ENCODE measurements at regions of chr1 and their contacts with region 1.

Region 1: GRCh38 chr1:92310185-92310597 is 11.3 kb downstream of the RPAP2 start:
- DNase-seq: peak in 3 of 14 experiments; percentile 62 to 66 (median 64)
- ATAC-seq: peak; percentile 72
- H3K4me3 ChIP-seq: no peak overlapping the region
- H3K4me3 Mint-ChIP-seq: no peak overlapping the region
- H3K27ac ChIP-seq: no peak overlapping the region
- H3K27ac Mint-ChIP-seq: no peak overlapping the region
- H3K4me1 ChIP-seq: peaks cover 24% of the 10 kb centered on the region
- H3K4me1 Mint-ChIP-seq: peaks cover 39% of the 10 kb centered on the region
- H3K27me3 ChIP-seq: no peaks in the 10 kb centered on the region
- H3K27me3 Mint-ChIP-seq: no peaks in the 10 kb centered on the region
- CTCF ChIP-seq: peak; percentile 75

Region 2: GRCh38 chr1:92599184-92599583 is 289.0 kb after region 1 on chr1:
- CTCF ChIA-PET with region 1: interaction called, 5 read pairs
- POLR2A ChIA-PET with region 1: no interaction called
- intact Hi-C with region 1: loop called (anchors 1 kb)
- DNase-seq: peak in 3 of 14 experiments; percentile 63 to 65 (median 63)
- ATAC-seq: peak; percentile 46
- H3K4me3 ChIP-seq: no peak overlapping the region
- H3K4me3 Mint-ChIP-seq: no peak overlapping the region
- H3K27ac ChIP-seq: no peak overlapping the region
- H3K27ac Mint-ChIP-seq: no peak overlapping the region
- H3K4me1 ChIP-seq: no peaks in the 10 kb centered on the region
- H3K4me1 Mint-ChIP-seq: peaks cover 5% of the 10 kb centered on the region
- H3K27me3 ChIP-seq: no peaks in the 10 kb centered on the region
- H3K27me3 Mint-ChIP-seq: no peaks in the 10 kb centered on the region
- CTCF ChIP-seq: peak; percentile 76

Measured in CD4-positive, alpha-beta T cell (primary cell).